K562 (cell line): ENCODE measurements at regions of chr5 and their contacts with region 1.

Region 1: DNA sequence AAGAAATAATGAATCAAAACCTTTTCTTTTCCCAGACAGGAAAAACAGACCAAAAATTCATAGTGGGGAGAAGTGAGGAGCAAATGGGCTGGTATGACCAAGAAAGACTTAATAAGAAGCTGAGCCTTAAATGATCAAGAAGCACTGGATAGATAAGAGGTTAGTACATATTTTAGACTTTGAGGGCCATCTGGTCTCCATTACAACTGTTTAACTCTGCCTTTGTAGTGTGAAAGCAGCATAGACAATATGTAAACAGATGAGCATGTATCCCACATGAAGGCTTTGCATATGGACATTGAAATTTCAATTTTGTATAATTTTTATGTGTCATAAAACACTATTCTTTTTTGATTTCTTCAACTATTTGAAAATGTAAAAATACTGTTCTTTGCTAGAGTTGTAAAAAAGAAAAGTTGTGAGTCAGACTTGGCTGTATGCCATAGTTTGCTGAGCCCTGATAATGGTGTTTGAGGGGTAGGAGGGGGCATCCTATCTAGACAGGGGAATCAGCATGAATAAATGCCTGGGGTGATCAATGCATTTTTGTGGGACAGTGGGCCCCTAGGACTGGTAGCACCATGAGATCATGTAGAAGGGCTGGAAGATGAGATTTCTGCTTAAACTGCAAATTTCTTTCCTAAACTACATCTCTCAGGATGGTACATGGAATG is 91.8 kb upstream of the GPR151 start:
- DNase-seq: no peak
- ATAC-seq: no peak
- H3K4me3 ChIP-seq: no peak overlapping the region
- H3K27ac ChIP-seq: no peak overlapping the region
- H3K4me1 ChIP-seq: no peaks in the 10 kb centered on the region
- H3K27me3 ChIP-seq: no peaks in the 10 kb centered on the region
- CTCF ChIP-seq: no peak
- EP300 ChIP-seq: no peak
- POLR2A ChIP-seq: no peak
- RAD21 ChIP-seq: no peak

Region 2: DNA sequence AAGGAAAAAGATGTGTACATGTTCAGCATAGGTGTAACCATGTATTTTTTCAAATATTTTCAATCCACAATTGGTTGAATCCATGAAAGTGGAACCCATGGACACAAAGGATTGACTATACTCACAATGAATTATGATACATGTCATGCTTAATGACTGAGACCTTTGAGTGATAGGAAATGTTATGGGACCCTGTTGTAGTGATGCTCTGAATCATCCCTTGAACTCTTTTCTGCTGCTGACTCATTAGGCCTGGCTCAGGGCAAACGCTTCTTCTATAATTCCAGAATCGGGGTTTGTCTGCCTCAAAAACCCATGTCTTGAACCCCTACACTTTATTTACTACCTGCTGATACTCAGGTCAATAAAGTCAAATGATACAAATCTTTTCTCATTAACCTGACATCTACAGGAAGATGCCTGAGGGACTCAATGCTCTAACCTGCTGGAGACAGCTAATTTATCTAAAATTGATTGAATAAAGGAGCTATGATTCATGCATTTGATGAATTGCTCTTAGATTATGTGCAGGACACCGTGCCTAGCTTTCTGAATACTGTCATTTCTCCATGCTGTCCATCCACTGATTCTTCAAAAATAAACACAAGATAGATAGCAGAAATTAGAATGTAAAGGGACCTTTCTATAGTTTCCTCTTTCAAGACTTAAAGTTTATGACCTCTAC is 1032.8 kb before region 1 on chr5:
- CTCF ChIA-PET with region 1: no interaction called
- POLR2A ChIA-PET with region 1: no interaction called
- in situ Hi-C with region 1: loop called (anchors 5 kb)
- intact Hi-C with region 1: no loop called
- DNase-seq: no peak
- ATAC-seq: no peak
- H3K4me3 ChIP-seq: no peak overlapping the region
- H3K27ac ChIP-seq: no peak overlapping the region
- H3K4me1 ChIP-seq: no peaks in the 10 kb centered on the region
- H3K27me3 ChIP-seq: no peaks in the 10 kb centered on the region
- CTCF ChIP-seq: no peak
- EP300 ChIP-seq: no peak
- POLR2A ChIP-seq: no peak
- RAD21 ChIP-seq: no peak

Region 3: GRCh38 chr5:146553435-146553834 is 54.4 kb before region 1 on chr5:
- CTCF ChIA-PET with region 1: no interaction called
- POLR2A ChIA-PET with region 1: no interaction called
- in situ Hi-C with region 1: no loop called
- intact Hi-C with region 1: no loop called
- DNase-seq: no peak
- ATAC-seq: no peak
- H3K4me3 ChIP-seq: no peak overlapping the region
- H3K27ac ChIP-seq: no peak overlapping the region
- H3K4me1 ChIP-seq: no peaks in the 10 kb centered on the region
- H3K27me3 ChIP-seq: no peaks in the 10 kb centered on the region
- CTCF ChIP-seq: no peak
- EP300 ChIP-seq: no peak
- POLR2A ChIP-seq: no peak
- RAD21 ChIP-seq: no peak

Region 4: DNA sequence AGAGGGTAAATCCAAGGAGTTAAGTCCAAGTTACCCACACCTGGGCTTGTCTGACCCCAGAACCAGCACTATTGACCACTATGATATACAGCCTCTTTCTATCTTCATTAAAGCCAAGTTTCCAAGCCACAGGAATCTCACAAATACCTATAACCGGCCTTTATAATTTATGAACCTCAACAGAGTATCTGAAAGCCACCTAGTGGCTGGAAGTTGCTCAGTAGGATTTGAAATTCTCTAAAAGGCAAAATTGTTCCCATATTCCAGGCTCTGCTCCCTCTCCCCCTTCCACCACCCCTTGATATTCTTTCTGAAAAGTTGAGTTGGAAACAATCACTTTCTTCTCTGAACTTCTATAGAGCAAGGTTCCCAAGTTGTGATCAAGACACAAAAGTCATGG is 14.6 kb after region 1 on chr5:
- CTCF ChIA-PET with region 1: no interaction called
- POLR2A ChIA-PET with region 1: no interaction called
- in situ Hi-C with region 1: no loop called
- intact Hi-C with region 1: no loop called
- DNase-seq: no peak
- ATAC-seq: no peak
- H3K4me3 ChIP-seq: no peak overlapping the region
- H3K27ac ChIP-seq: no peak overlapping the region
- H3K4me1 ChIP-seq: no peaks in the 10 kb centered on the region
- H3K27me3 ChIP-seq: no peaks in the 10 kb centered on the region
- CTCF ChIP-seq: peak in 2 of 3 experiments; percentile 12 to 23; a peak in 1 of 6 replicates
- EP300 ChIP-seq: no peak
- POLR2A ChIP-seq: no peak
- RAD21 ChIP-seq: no peak